ENCODE measurements at regions of chr3 and their contacts with region 1.

Region 1: DNA sequence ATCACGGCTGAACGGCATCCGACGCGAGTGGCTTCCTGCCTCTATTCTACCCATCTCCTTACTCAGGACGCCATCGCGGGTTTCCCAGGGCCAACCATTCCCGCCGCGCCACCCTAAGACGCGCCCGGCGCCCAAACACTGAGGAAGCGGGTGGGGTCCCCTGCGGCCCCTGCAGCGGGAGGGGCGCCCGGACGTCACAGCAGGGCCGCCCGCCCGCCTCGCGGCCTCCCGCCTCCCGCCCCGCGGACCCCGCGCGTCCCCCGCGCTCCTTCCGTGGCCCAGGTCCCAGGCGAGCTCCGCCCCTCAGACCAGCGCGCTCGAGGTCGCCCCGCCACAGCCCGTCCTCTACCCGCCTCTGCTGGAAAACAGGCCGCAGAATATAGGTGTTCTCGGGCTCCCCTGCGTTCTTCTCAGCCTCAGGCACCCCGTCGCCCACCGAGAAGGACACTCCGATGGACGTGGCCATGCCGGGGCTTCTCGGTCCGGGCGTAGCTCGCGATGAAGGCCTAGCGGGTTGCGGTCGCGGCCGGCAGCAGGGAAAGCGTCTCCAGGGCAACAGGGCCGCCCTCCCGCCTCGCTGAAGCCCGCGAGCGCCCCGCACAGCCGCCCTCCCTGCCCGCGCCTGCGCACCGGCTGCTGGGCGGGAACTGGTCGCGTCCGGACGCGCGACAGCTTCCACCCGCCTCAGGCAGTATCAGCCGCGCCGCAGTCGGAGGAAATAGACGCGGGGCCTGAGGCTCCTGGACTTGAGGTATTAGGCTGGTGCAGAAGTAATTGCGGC is at the start of gene DYNLT2B:
- DNase-seq: peak; percentile 49 to 91
- H3K4me3 ChIP-seq: peak within 1 kb of the TSS; percentile 92 to 97
- H3K27ac ChIP-seq: peak within 1 kb of the TSS; percentile 88 to 89
- H3K4me1 ChIP-seq: no peaks in the 10 kb centered on the region
- H3K27me3 ChIP-seq: no peaks in the 10 kb centered on the region
- CTCF ChIP-seq: no peak
- total RNA-seq, gene DYNLT2B: not detected

Region 2: DNA sequence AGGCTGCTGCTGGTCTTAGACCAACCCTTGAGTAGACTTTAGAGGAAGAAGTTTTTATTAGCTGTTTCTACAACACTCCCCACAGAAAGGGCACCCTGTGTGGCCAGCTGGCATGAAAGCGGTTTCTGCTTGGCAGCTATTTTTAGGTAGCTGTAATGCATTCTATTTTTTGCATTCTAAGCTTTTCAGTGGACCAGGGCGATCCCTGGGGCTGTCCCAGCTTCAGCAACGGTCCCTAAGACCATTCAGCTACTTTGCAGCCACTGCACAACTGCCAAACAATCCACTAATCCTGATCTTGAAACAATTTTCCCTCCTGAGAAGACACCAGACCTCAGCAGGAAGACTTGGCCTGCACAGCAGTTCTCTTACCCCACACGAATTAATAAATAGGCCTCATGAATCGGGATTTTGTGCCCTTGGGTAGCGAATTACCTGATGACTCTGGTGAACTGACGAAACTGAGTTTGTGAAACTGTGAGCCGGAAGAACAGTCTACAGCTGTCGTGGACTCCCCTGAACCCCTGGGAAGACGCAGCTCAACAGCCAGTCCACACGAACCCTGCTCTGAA is 221.4 kb before region 1 on chr3:
- intact Hi-C with region 1: no loop called
- DNase-seq: peak in 1 of 2 donors; percentile 75
- H3K4me3 ChIP-seq: no peak overlapping the region
- H3K27ac ChIP-seq: peak overlapping the region in 1 of 2 donors; percentile 10
- H3K4me1 ChIP-seq: peaks cover 0 to 3% of the 10 kb centered on the region in 2 donors
- H3K27me3 ChIP-seq: no peaks in the 10 kb centered on the region
- CTCF ChIP-seq: no peak

Region 3: GRCh38 chr3:196287440-196288148 is 30.3 kb before region 1 on chr3 and contains the start of gene PCYT1A:
- intact Hi-C with region 1: loop called (anchors 1 kb)
- DNase-seq: peak; percentile 77 to 96
- H3K4me3 ChIP-seq: peak within 1 kb of the TSS; percentile 75 to 78
- H3K27ac ChIP-seq: peak within 1 kb of the TSS; percentile 82 to 92
- H3K4me1 ChIP-seq: peaks cover 0 to 30% of the 10 kb centered on the region in 2 donors
- H3K27me3 ChIP-seq: no peaks in the 10 kb centered on the region
- CTCF ChIP-seq: no peak
- total RNA-seq, gene PCYT1A: 30.7 TPM

Region 4: GRCh38 chr3:196489747-196490146 is 171.9 kb after region 1 on chr3:
- intact Hi-C with region 1: no loop called
- DNase-seq: no peak
- H3K4me3 ChIP-seq: no peak overlapping the region
- H3K27ac ChIP-seq: no peak overlapping the region
- H3K4me1 ChIP-seq: no peaks in the 10 kb centered on the region
- H3K27me3 ChIP-seq: no peaks in the 10 kb centered on the region
- CTCF ChIP-seq: no peak